Activated CD4-positive, alpha-beta memory T cell treated with anti-CD3 and anti-CD28 coated beads, Interleukin-2, amount 10 ng/mL, durations not matched to agents 7 days and 5 days (primary cell): ENCODE measurements at regions of chr17 and their contacts with region 1.

Region 1: DNA sequence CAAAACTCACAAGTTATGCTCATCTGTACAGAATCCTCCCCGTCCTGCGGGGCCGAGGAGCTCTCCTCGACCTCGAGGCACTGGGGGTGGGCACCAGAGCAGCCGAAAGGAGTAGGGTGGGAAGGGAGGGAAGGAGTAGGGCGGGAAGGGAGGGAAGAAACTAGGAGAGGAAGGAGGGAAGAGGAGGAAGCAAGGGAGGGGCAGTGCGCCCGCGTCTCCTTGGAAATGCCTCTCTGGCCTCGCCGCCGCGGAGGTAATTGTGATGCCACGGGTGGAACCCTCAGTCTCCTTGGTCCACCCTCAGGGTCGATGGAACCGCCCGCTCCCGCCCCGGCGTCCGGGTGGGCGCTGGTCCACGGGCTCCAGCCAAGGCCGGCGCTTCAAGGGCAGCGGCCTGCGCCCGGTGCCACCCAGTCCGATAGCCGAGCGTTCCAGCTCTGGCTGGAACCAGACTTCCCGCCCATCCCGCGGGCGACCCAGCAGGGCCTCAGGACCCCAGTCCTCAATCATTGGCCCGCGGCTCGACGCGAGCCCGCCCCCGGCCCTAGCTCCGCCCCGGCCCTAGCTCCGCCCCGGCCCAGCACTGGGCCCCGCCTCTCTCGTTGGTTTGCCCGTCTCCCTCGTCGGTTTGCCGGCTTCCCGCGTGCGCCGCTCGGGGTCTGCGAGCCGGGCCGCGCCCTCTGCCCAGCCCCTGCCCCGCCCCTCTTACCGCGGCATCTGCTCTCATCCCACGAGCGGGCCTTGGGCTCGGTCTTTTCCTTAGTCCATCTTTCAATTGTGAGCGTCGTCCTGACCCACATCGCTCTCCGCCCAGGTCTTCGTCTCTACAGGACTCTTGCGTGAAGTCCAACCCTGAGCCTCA is 596 bp downstream of the PROCA1 start:
- DNase-seq: peak; percentile 92
- H3K4me3 Mint-ChIP-seq: peak overlapping the region; percentile 80
- H3K27ac Mint-ChIP-seq: peak overlapping the region; percentile 90
- H3K4me1 Mint-ChIP-seq: peaks cover 22% of the 10 kb centered on the region
- H3K27me3 Mint-ChIP-seq: peaks cover 17% of the 10 kb centered on the region

Region 2: GRCh38 chr17:28509789-28510188 is 201.3 kb before region 1 on chr17:
- CTCF ChIA-PET with region 1: no interaction called
- POLR2A ChIA-PET with region 1: no interaction called
- DNase-seq: no peak
- H3K4me3 Mint-ChIP-seq: no peak overlapping the region
- H3K27ac Mint-ChIP-seq: no peak overlapping the region
- H3K4me1 Mint-ChIP-seq: no peaks in the 10 kb centered on the region
- H3K27me3 Mint-ChIP-seq: peaks cover 16% of the 10 kb centered on the region

Region 3: DNA sequence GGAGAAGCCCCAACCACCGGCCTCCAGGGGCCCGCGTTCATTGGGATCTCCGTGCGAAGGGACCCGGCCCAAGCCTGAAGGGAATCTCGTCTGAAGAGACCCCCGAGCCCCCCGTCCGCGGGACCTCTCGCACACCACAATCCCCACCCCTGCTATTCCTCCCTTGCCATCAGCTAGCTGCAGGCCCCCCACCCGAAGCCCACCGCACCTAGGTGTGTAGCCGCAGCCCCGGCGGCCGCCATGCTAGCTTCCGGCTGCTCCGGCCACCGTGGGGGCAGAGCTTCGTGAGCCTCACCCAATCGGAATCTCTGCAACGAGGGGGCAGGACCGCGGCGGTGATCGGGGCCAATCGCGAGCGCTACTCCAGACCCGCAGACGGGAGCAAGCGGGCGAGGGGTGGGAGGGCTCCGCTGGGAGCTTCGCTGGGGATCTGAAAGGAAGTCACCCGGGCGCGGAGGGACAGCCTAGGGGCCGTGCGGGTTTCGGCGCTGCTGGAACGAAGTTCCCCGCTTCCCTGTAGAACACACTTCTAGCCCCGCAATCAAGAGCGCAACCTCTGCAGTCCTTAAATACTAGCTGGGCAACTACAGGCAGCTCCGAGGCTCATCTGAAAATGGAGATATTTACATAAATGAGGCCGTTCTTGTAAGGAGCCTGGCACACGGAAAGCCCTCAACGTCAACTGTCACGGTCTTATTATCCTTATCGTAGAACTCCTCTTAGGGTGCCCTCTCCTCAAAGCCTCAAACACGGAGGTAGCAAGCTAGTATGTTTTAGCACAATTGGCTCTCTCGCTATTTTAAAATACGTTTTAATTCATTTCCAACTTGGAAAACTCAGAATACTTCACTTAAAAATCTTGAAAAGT is 139.6 kb before region 1 on chr17 and contains the start of gene PIGS:
- CTCF ChIA-PET with region 1: no interaction called
- POLR2A ChIA-PET with region 1: interaction called, 11 read pairs
- DNase-seq: peak; percentile 94
- H3K4me3 Mint-ChIP-seq: peak within 1 kb of the TSS; percentile 96
- H3K27ac Mint-ChIP-seq: peak within 1 kb of the TSS; percentile 84
- H3K4me1 Mint-ChIP-seq: peaks cover 60% of the 10 kb centered on the region
- H3K27me3 Mint-ChIP-seq: no peaks in the 10 kb centered on the region
- total RNA-seq, gene PIGS: 66.3 to 66.6 TPM

Region 4: DNA sequence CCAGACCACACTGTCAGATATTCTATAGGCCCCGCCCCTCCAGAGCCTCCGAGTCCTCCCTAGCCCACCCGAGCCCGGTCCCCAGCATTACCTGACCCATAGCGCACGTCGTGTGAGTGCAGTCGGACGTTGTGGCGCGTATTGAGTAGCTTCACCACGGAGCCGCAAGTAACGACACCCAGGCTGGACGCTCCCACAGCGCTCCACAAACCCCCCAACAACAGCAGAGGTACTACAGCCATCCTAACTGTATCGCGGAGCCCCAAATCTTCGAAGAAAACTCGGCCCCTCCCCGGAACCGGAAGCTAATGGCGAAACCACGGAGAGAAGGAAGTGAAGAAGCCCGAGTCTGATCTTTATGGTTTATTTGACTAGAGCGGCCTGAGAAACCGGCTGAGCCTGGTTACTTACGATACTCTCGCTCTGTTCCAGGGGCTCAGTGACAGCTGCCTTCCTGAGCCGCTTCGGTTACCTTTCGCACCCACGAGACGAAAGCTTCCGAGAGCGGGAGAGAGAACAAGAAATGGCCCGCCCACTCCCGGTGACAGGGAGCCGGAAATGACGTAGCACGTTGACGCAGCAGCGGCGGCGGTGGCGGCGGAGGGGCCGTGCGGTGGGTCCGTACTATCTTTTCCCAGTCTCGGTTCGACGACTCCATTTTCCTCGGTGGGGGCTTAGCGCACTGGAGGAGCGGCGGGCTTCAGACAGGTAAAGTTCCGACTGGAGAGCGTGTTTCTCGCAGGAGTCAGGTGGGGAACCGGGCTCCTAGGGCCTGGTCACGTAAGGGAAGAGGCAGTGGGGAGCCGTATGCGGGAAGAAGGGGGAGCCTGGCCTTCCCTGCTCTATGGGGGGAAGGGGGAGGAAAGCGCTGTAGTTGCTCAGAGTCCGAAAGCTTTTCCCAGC is 49.2 kb before region 1 on chr17 and contains the starts of genes SDF2 and SUPT6H:
- CTCF ChIA-PET with region 1: interaction called, 11 read pairs
- POLR2A ChIA-PET with region 1: interaction called, 21 read pairs
- DNase-seq: peak; percentile 94
- H3K4me3 Mint-ChIP-seq: peak within 1 kb of the TSS; percentile 98
- H3K27ac Mint-ChIP-seq: peak within 1 kb of the TSS; percentile 98
- H3K4me1 Mint-ChIP-seq: peaks cover 52% of the 10 kb centered on the region
- H3K27me3 Mint-ChIP-seq: no peaks in the 10 kb centered on the region
- total RNA-seq, gene SDF2: 49.0 to 52.9 TPM
- total RNA-seq, gene SUPT6H: 60.7 to 65.8 TPM

Region 5: DNA sequence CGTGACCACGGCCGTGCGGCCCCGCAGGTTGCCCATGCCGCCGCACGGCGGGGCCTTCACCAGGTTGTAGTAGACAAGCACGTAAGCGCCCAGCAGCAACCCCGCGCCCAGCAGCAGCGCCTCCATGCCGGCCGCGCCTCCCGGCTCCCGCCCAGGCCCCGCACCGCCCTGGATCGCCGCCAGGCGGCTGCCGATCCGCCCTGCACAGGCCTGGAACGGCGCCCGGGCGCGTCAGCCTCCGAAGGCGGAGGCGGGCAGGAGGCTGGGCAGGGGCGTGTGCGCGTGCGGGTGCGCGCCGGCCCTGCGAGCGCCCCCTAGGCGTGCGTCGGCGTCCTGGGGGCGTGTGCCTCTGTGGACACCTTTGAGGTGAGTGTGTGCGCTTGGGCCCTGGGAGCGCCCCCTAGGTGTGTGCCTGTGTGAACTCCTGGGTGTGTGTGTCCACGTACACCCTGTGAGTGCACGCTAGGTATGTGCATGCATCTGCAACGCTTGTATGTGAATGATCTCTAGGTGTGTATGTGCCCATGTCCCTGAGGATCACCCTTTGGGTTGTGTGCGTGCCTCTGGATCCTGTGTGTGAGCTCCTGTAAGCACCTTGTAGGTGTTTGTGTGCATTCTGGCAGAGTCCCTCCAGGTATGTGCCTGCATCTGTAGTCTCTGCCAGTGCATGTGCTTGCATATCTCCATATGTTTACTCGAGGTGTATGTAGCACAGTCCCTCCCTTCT is 191.9 kb after region 1 on chr17 and contains the start of gene DHRS13:
- CTCF ChIA-PET with region 1: no interaction called
- POLR2A ChIA-PET with region 1: no interaction called
- DNase-seq: peak; percentile 94
- H3K4me3 Mint-ChIP-seq: peak within 1 kb of the TSS; percentile 79
- H3K27ac Mint-ChIP-seq: peak within 1 kb of the TSS; percentile 78
- H3K4me1 Mint-ChIP-seq: peaks cover 48% of the 10 kb centered on the region
- H3K27me3 Mint-ChIP-seq: no peaks in the 10 kb centered on the region
- total RNA-seq, gene DHRS13: 25.2 to 25.7 TPM

Region 6: GRCh38 chr17:29145289-29146073 is 434.4 kb after region 1 on chr17:
- CTCF ChIA-PET with region 1: no interaction called
- POLR2A ChIA-PET with region 1: no interaction called
- DNase-seq: peak; percentile 79
- H3K4me3 Mint-ChIP-seq: no peak overlapping the region
- H3K27ac Mint-ChIP-seq: peak overlapping the region; percentile 32
- H3K4me1 Mint-ChIP-seq: peaks cover 79% of the 10 kb centered on the region
- H3K27me3 Mint-ChIP-seq: no peaks in the 10 kb centered on the region